ENCODE measurements at regions of chr17 and their contacts with region 1.

Region 1: GRCh38 chr17:44141717-44142285 is at the start of gene HROB:
- DNase-seq: peak; percentile 96
- ATAC-seq: peak; percentile 70
- H3K4me3 ChIP-seq: peak within 1 kb of the TSS; percentile 90 to 93
- H3K27ac ChIP-seq: peak within 1 kb of the TSS; percentile 83
- H3K4me1 ChIP-seq: peaks cover 33 to 58% of the 10 kb centered on the region in 2 experiments
- H3K27me3 ChIP-seq: no peaks in the 10 kb centered on the region
- CTCF ChIP-seq: peak; percentile 76 to 89 (median 80)
- POLR2A ChIP-seq: peak; percentile 9
- RAD21 ChIP-seq: peak; percentile 60
- total RNA-seq, gene HROB: 14.3 TPM

Region 2: DNA sequence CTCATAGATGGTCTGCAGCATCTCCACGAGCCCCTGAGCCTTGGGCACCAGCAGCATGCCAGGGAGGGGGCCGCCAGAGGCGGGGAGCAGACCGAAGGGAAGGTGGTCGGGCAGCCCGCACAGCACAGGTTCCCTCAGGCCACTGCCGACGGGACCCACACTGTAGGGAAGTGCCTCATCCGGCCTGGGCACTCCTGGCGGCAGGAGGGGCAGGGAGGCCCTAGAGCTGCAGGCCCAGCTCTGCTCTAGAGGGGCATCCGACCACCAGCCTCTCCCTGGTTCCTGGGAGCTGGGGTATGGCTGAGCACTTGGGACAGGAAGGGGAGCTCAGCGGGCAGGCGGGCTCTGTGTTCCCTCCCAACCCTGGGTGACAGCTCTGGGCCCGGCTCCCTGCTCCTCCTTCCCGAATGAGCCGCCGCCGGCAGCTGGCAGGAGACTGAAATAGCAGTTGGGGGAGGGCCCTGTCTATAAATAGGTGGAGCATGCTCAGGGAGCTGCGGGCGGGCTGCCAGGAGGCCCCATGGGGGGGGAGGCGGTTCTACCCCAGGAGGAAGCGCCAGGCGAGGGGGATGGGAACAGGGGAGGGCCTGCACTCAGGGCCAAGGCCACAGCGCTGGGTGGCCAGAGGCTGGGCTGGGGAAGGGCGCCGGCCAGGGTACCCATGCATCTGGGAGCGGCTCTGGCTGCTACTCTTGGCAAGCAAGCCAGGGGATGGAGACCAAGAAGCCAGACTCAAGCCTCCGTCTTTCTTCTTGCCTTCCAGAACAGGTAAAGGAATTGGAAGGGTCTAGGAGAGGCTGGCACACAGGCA is 30.8 kb before region 1 on chr17:
- CTCF ChIA-PET with region 1: interaction called, 10 read pairs
- POLR2A ChIA-PET with region 1: interaction called, 3 read pairs
- RAD21 ChIA-PET with region 1: no interaction called
- intact Hi-C with region 1: no loop called
- DNase-seq: no peak
- ATAC-seq: peak; percentile 86
- H3K4me3 ChIP-seq: peak overlapping the region; percentile 17 to 43
- H3K27ac ChIP-seq: peak overlapping the region; percentile 66
- H3K4me1 ChIP-seq: peaks cover 46 to 66% of the 10 kb centered on the region in 2 experiments
- H3K27me3 ChIP-seq: no peaks in the 10 kb centered on the region
- CTCF ChIP-seq: no peak
- POLR2A ChIP-seq: no peak
- RAD21 ChIP-seq: no peak

Region 3: DNA sequence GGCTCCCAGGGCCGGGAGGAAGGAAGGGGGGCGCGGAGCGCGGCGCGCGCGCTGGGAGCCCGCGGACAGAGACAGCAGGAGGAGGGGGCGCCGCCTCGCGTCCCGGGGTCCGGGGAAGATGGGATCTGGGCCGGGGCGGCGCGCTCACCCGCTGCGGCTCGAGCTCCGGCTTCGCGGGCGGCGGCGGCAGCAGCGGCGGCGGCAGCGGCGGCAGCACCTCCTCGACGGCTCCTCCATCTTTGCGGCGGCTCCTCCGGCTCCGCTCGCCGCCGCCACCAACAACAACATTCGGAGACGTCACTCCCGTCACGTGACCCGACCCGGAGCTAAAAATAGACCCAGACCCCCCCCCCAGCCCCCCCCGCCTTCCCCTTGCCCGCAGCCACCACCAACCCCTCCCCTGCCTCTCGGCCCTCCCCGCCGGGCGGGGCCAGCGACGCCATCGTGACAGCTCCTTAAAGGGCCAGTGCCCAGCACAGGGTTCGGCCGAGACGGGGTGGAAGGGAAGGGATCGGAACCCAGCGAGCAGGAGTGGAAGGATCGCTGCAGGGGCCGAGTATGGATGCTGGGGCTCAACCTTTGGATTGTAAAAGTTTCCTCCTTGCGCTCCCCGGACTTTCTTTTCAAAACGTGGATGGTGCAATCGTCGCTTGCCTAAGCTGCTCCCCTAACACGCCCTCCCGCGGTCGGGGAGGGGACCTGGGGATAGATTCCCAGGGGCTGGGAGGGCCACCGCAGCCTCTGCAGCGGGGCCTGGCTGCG is 18.3 kb before region 1 on chr17 and contains the start of gene HDAC5:
- CTCF ChIA-PET with region 1: interaction called, 9 read pairs
- POLR2A ChIA-PET with region 1: interaction called, 14 read pairs
- RAD21 ChIA-PET with region 1: interaction called in 1 of 2 experiments, 3 read pairs
- intact Hi-C with region 1: loop called (anchors 1 kb)
- DNase-seq: peak; percentile 90
- ATAC-seq: peak; percentile 94
- H3K4me3 ChIP-seq: peak within 1 kb of the TSS; percentile 65 to 85
- H3K27ac ChIP-seq: peak within 1 kb of the TSS; percentile 77
- H3K4me1 ChIP-seq: peaks cover 14 to 36% of the 10 kb centered on the region in 2 experiments
- H3K27me3 ChIP-seq: no peaks in the 10 kb centered on the region
- CTCF ChIP-seq: peak; percentile 53 to 59 (median 53); a peak in 5 of 6 replicates
- POLR2A ChIP-seq: no peak
- RAD21 ChIP-seq: peak; percentile 52
- total RNA-seq, gene HDAC5: 32.9 TPM

Region 4: GRCh38 chr17:44331249-44331760 is 189.5 kb after region 1 on chr17:
- CTCF ChIA-PET with region 1: no interaction called
- POLR2A ChIA-PET with region 1: no interaction called
- RAD21 ChIA-PET with region 1: no interaction called
- intact Hi-C with region 1: loop called (anchors 1 kb)
- DNase-seq: peak; percentile 79
- ATAC-seq: peak; percentile 63
- H3K4me3 ChIP-seq: no peak overlapping the region; a peak in 1 of 4 replicates
- H3K27ac ChIP-seq: no peak overlapping the region
- H3K4me1 ChIP-seq: peaks cover 18 to 31% of the 10 kb centered on the region in 2 experiments
- H3K27me3 ChIP-seq: no peaks in the 10 kb centered on the region
- CTCF ChIP-seq: peak; percentile 75 to 93 (median 88)
- POLR2A ChIP-seq: no peak
- RAD21 ChIP-seq: peak; percentile 85